CD4-positive, alpha-beta memory T cell (primary cell): ENCODE measurements at regions of chr1 and their contacts with region 1.

Region 1: DNA sequence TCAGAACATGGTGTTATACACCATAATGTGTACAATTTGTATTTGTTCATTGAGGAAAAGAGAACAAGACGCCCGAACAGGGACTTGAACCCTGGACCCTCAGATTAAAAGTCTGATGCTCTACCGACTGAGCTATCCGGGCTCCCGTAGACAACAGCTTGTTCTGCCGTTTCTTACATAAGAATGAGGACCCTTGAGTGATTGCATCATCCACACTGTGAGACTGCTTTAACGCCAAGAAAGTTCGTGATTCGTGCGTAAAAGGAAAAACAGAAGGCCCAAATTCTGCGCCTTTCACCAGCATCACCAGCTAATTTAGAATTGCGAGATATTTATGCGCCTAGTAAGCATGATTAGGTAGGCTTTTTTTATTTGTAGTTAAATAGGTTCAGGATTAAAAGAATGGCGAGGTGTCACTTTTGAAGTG is 9.2 kb upstream of the MDM4 start:
- DNase-seq: peak; percentile 93 to 94 (median 94)
- H3K4me3 ChIP-seq: peak overlapping the region; percentile 53 to 83
- H3K4me3 Mint-ChIP-seq: peak overlapping the region; percentile 86 to 97 (median 92)
- H3K27ac ChIP-seq: peak overlapping the region; percentile 78
- H3K27ac Mint-ChIP-seq: peak overlapping the region; percentile 87 to 100 (median 99)
- H3K4me1 ChIP-seq: peaks cover 29% of the 10 kb centered on the region
- H3K4me1 Mint-ChIP-seq: peaks cover 21 to 45% (median 33%) of the 10 kb centered on the region in 4 donors
- H3K27me3 ChIP-seq: no peaks in the 10 kb centered on the region
- H3K27me3 Mint-ChIP-seq: peaks cover 2 to 13% of the 10 kb centered on the region in 2 donors

Region 2: GRCh38 chr1:204162231-204163074 is 344.5 kb before region 1 on chr1:
- CTCF ChIA-PET with region 1: interaction called, 3 read pairs
- POLR2A ChIA-PET with region 1: no interaction called
- intact Hi-C with region 1: loop called (anchors 2 kb)
- DNase-seq: peak; percentile 65 to 76 (median 68)
- H3K4me3 ChIP-seq: no peak overlapping the region
- H3K4me3 Mint-ChIP-seq: no peak overlapping the region
- H3K27ac ChIP-seq: no peak overlapping the region
- H3K27ac Mint-ChIP-seq: no peak overlapping the region
- H3K4me1 ChIP-seq: no peaks in the 10 kb centered on the region
- H3K4me1 Mint-ChIP-seq: no peaks in the 10 kb centered on the region
- H3K27me3 ChIP-seq: no peaks in the 10 kb centered on the region
- H3K27me3 Mint-ChIP-seq: peaks cover 2 to 4% of the 10 kb centered on the region in 2 donors

Region 3: DNA sequence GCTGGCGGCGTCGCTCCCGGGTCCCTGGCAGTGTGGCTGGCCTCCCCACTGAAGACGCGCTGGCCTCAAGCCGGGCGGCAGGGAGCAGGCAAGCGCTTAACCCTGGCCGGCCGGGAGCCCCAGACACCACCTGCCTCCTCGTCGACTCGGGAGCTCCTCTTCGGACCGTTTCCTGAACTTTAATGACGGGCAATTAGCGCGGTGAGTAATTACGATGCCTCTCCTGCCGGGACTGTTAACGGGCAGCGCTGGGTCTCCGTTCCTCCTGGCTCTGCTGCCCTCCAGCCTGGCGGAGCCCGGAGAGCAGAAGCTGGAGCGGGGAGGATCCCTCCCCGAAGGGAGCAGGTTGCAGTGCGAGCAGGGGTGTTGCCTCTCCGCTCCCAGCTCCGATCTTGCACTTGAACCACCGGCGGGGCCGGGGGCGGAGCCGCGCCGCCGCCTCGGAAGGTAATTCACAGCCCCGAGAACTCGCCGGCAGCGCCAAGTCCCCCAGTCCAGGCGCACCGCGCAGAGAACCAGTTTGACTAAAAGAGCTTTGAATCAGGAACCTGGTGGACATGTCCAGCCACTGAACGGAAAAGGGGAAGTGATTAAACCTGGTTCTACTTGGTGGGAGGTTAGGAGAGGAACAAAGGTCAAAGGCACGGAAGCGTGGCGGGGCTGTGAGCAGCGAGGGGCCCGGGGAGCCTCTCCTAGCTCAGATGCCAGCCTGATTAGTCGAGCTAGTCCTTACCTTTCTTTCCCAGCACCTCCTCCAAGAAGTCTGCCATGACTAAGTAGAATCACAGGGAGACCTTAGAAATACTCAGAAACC is 129.0 kb before region 1 on chr1:
- CTCF ChIA-PET with region 1: no interaction called
- POLR2A ChIA-PET with region 1: no interaction called
- intact Hi-C with region 1: no loop called
- DNase-seq: peak; percentile 40 to 60 (median 43)
- H3K4me3 ChIP-seq: peak overlapping the region; percentile 51 to 63
- H3K4me3 Mint-ChIP-seq: peak overlapping the region; percentile 85 to 92 (median 88)
- H3K27ac ChIP-seq: no peak overlapping the region
- H3K27ac Mint-ChIP-seq: peak overlapping the region in 3 of 7 donors; percentile 9 to 71 (median 51)
- H3K4me1 ChIP-seq: peaks cover 11% of the 10 kb centered on the region
- H3K4me1 Mint-ChIP-seq: peaks cover 9 to 16% (median 11%) of the 10 kb centered on the region in 4 donors
- H3K27me3 ChIP-seq: peaks cover 26% of the 10 kb centered on the region
- H3K27me3 Mint-ChIP-seq: peaks cover 12 to 16% of the 10 kb centered on the region in 2 donors

Region 4: DNA sequence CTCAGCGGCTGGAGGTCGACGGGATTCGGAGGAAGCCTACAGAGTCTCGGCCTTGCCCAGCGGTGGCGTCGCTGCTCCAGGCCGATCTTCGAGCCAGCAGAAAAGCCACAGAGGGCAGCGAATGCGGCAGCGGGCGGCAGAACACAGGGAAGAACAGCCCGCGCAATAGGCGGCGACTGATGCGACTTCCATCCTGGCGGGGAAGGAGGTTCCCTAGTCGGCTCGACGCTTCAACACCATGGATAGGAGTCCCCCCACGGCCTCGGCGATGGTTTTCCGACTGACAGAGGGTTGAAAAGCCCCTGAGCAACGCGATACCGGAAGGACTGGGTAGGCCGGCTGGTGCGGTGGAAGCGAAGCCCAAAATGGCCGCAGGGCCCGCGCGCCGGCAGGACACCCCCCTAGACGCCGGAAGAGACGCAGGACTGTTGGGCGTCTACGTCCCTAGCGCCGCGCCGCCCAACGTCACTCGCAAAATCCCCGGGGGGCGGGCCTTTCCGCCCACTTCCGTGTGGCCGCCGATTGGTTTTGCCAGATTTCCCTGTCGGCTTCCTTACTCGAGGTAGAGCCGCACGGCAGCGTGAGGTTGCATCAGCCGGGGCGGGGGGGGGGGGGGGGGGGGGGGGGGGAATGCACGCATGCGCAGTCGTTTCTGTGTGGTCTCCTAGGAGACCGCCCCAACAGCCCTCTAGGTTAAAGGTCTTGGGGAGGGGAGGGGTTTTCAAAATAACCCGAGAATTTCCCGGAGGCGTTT is 95.3 kb before region 1 on chr1 and contains the start of gene PPP1R15B:
- CTCF ChIA-PET with region 1: interaction called, 6 read pairs
- POLR2A ChIA-PET with region 1: interaction called, 21 read pairs
- intact Hi-C with region 1: loop called (anchors 1 kb)
- DNase-seq: peak; percentile 98 to 99 (median 98)
- H3K4me3 ChIP-seq: peak within 1 kb of the TSS; percentile 67 to 99
- H3K4me3 Mint-ChIP-seq: peak within 1 kb of the TSS; percentile 98 to 99 (median 99)
- H3K27ac ChIP-seq: peak within 1 kb of the TSS; percentile 100
- H3K27ac Mint-ChIP-seq: peak within 1 kb of the TSS; percentile 99 to 100 (median 100)
- H3K4me1 ChIP-seq: peaks cover 7% of the 10 kb centered on the region
- H3K4me1 Mint-ChIP-seq: peaks cover 8 to 21% (median 13%) of the 10 kb centered on the region in 4 donors
- H3K27me3 ChIP-seq: no peaks in the 10 kb centered on the region
- H3K27me3 Mint-ChIP-seq: no peaks in the 10 kb centered on the region
- total RNA-seq, gene PPP1R15B: 78.0 to 81.1 TPM

Region 5: GRCh38 chr1:204453141-204453772 is 53.7 kb before region 1 on chr1:
- CTCF ChIA-PET with region 1: interaction called, 1,077 read pairs
- POLR2A ChIA-PET with region 1: interaction called, 5 read pairs
- intact Hi-C with region 1: no loop called
- DNase-seq: peak; percentile 79 to 96 (median 88)
- H3K4me3 ChIP-seq: peak overlapping the region in 1 of 2 donors; percentile 21
- H3K4me3 Mint-ChIP-seq: peak overlapping the region; percentile 63 to 81 (median 73)
- H3K27ac ChIP-seq: peak overlapping the region; percentile 76
- H3K27ac Mint-ChIP-seq: peak overlapping the region; percentile 86 to 98 (median 96)
- H3K4me1 ChIP-seq: peaks cover 48% of the 10 kb centered on the region
- H3K4me1 Mint-ChIP-seq: peaks cover 26 to 63% (median 43%) of the 10 kb centered on the region in 4 donors
- H3K27me3 ChIP-seq: no peaks in the 10 kb centered on the region
- H3K27me3 Mint-ChIP-seq: no peaks in the 10 kb centered on the region

Region 6: GRCh38 chr1:204494281-204495077 is 12.5 kb before region 1 on chr1 and contains the start of gene PIK3C2B:
- CTCF ChIA-PET with region 1: interaction called, 97 read pairs
- POLR2A ChIA-PET with region 1: interaction called, 104 read pairs
- intact Hi-C with region 1: loop called (anchors 1 kb)
- DNase-seq: peak; percentile 70 to 84 (median 75)
- H3K4me3 ChIP-seq: peak within 1 kb of the TSS; percentile 62 to 99
- H3K4me3 Mint-ChIP-seq: peak within 1 kb of the TSS; percentile 90 to 99 (median 96)
- H3K27ac ChIP-seq: peak within 1 kb of the TSS; percentile 90
- H3K27ac Mint-ChIP-seq: peak within 1 kb of the TSS; percentile 90 to 99 (median 97)
- H3K4me1 ChIP-seq: peaks cover 47% of the 10 kb centered on the region
- H3K4me1 Mint-ChIP-seq: peaks cover 35 to 72% (median 45%) of the 10 kb centered on the region in 4 donors
- H3K27me3 ChIP-seq: no peaks in the 10 kb centered on the region
- H3K27me3 Mint-ChIP-seq: no peaks in the 10 kb centered on the region
- total RNA-seq, gene PIK3C2B: 43.4 to 46.9 TPM

Region 7: GRCh38 chr1:204544321-204544720 is 37.3 kb after region 1 on chr1:
- CTCF ChIA-PET with region 1: interaction called, 15 read pairs
- POLR2A ChIA-PET with region 1: interaction called, 178 read pairs
- intact Hi-C with region 1: loop called (anchors 1 kb)
- DNase-seq: peak; percentile 51 to 72 (median 62)
- H3K4me3 ChIP-seq: no peak overlapping the region
- H3K4me3 Mint-ChIP-seq: peak overlapping the region; percentile 11 to 80 (median 53)
- H3K27ac ChIP-seq: peak overlapping the region; percentile 56
- H3K27ac Mint-ChIP-seq: peak overlapping the region; percentile 25 to 88 (median 76)
- H3K4me1 ChIP-seq: peaks cover 51% of the 10 kb centered on the region
- H3K4me1 Mint-ChIP-seq: peaks cover 34 to 60% (median 47%) of the 10 kb centered on the region in 4 donors
- H3K27me3 ChIP-seq: no peaks in the 10 kb centered on the region
- H3K27me3 Mint-ChIP-seq: no peaks in the 10 kb centered on the region